GM18951 (cell line): ENCODE measurements at regions of chrX and their contacts with region 1.

Region 1: DNA sequence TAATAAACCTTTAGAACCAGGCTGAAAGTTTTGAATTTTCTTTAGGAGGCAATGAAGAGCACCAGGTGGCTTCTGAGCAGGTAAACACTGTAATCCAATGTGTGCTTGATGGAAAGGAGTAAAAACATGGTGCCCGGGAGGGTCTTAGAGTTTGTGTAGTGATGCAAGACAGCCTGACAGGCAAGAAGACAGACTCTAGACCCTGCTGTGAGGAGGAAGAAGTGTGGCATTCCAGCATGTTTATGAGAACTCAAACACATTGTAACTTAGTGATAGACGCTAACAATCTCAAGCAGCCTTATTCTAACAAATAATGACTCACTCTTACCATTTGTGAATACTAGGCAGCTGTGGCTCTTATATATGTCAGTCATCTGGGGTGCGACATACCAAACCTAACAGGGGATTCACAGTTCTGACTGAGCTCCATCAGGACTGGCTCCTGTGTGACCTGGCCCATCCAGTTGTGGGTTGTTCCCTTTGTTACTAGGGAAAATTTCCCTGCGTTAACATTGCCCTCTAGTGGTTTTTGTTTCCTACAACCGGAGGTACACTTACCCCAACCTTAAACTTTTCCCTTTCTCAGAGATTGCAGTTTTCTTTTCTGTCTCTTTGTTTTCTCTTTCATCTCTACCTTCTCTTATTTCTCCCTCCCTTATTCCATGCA is 53.8 kb downstream of the VSIG4 start:
- POLR2A ChIP-seq: no peak

Region 2: GRCh38 chrX:65587616-65588526 is 398.2 kb before region 1 on chrX:
- in situ Hi-C with region 1: loop called (anchors 5 kb)
- POLR2A ChIP-seq: no peak

Region 3: DNA sequence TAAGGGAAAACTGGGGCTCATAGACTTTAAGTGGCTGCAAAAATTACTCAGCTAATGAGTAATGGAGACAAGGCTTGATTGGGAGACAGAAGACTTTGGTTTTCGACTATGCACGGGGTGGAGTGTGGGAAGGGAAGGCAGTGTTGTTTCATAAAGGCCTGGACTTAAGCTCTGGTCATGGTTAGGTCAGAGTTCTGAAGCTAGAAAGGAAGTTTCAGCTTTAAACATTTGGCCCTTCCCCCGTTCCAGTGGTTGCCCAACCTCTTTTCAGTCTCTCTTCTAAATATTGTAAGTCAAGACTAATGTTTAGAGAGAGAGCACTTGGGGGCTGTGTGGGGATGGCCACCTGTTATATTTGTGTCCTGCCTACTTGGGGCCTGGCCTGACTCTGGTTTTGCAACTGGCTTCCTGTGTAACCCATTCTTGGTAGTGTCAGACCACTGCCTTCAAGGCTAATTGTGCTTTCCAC is 297.6 kb before region 1 on chrX:
- in situ Hi-C with region 1: no loop called
- POLR2A ChIP-seq: no peak

Region 4: DNA sequence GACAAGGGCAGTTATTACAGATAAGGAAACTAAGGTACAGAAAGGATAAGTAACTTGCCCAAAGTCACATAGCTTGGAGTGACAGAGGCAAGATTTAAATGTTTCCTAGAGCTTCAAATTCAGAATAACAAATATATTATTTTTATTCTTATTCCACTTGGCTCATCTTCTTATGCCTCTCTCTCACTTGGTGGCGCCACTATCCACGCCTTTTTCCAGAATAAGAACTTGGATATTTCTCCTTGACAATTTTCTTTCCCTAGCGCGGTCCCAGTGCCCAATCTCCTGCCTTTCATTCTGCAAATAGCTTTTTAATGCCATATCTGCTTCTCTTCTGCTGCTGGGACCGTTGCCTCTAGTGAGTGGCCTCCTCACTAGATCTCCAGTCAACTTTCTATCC is 240.1 kb before region 1 on chrX:
- in situ Hi-C with region 1: loop called (anchors 25 kb)
- POLR2A ChIP-seq: no peak

Region 5: DNA sequence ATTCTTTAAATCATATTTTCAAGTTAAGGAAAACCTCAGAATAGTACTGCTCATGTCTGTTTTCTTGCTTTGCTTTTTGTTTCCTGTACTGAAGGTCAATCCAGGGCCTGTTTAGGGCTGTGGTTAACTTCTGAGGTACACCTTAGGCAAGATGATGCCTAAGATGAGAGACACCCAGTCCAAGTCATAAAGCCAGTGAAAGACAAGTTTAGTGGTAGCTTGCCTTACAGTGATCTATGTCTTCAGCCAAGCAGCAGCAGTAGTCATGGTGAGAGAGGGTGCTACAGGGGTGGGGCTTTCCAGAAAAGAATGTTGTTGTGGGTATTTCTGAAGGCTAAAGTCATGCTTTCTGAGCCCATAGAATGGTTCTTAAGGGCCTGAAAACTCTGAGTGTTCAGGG is 119.9 kb before region 1 on chrX:
- in situ Hi-C with region 1: no loop called
- POLR2A ChIP-seq: no peak